AG04449 (cell line): ENCODE measurements at regions of chr11 and their contacts with region 1.

Region 1: GRCh38 chr11:20387241-20388095 is at the start of gene PRMT3:
- DNase-seq: peak; percentile 59
- H3K4me3 ChIP-seq: peak within 1 kb of the TSS; percentile 98
- CTCF ChIP-seq: peak; percentile 99

Region 2: DNA sequence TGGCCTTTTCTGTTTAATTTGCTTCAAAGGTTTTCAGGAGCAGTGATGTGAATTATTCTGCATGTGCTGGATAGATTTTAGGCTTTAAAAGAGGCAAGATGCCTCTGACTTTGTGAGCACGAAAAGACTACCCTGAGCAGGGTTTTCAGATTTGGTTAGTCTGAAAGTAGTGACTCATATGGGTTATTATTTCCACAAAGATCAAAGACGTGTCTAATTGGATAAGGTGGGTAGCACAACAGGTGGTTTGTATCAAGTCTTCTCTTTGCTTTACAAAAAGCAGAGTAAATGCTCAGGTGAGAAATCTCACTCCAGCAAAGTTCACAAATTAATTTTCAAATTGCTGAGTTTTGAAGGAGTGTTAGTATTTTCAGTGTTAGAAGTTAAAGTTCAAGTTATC is 189.6 kb before region 1 on chr11:
- CTCF ChIA-PET with region 1: no interaction called
- POLR2A ChIA-PET with region 1: no interaction called
- DNase-seq: no peak
- H3K4me3 ChIP-seq: no peak overlapping the region
- CTCF ChIP-seq: no peak

Region 3: GRCh38 chr11:20374746-20375300 is 12.6 kb before region 1 on chr11:
- CTCF ChIA-PET with region 1: interaction called, 10 read pairs
- POLR2A ChIA-PET with region 1: no interaction called
- DNase-seq: no peak
- H3K4me3 ChIP-seq: no peak overlapping the region
- CTCF ChIP-seq: no peak

Region 4: GRCh38 chr11:20609727-20610707 is 222.5 kb after region 1 on chr11:
- CTCF ChIA-PET with region 1: interaction called, 15 read pairs
- POLR2A ChIA-PET with region 1: no interaction called
- DNase-seq: no peak
- H3K4me3 ChIP-seq: peak overlapping the region; percentile 18; the same call in 1 of the 2 replicates
- CTCF ChIP-seq: peak; percentile 97